B cell (primary cell): ENCODE measurements at regions of chr5 and their contacts with region 1.

Region 1: DNA sequence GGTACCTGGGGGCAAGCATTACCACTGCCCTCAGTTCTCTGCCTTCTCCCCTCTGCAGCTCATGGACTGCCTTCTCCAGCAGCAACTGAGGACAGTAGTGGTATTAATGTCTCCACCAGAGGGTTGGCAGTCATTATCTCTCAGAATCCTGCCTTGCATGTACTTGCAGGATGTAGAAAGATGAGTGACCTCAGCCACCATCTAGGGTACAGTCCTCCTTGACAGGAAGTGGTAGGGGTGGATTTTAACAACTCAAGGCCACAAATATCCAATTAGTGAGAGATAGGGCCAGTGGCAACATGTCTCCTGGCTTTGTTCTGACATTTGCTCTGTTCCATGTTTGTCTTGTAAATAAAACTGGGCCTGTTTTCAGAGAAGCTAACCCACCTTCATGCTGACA is 47.2 kb downstream of the F2R start:
- DNase-seq: no peak
- ATAC-seq: no peak
- H3K4me3 ChIP-seq: no peak overlapping the region
- H3K4me3 Mint-ChIP-seq: no peak overlapping the region
- H3K27ac ChIP-seq: no peak overlapping the region
- H3K27ac Mint-ChIP-seq: no peak overlapping the region
- H3K4me1 ChIP-seq: no peaks in the 10 kb centered on the region
- H3K4me1 Mint-ChIP-seq: no peaks in the 10 kb centered on the region
- H3K27me3 ChIP-seq: no peaks in the 10 kb centered on the region
- H3K27me3 Mint-ChIP-seq: peaks cover 17% of the 10 kb centered on the region
- CTCF ChIP-seq: no peak

Region 2: DNA sequence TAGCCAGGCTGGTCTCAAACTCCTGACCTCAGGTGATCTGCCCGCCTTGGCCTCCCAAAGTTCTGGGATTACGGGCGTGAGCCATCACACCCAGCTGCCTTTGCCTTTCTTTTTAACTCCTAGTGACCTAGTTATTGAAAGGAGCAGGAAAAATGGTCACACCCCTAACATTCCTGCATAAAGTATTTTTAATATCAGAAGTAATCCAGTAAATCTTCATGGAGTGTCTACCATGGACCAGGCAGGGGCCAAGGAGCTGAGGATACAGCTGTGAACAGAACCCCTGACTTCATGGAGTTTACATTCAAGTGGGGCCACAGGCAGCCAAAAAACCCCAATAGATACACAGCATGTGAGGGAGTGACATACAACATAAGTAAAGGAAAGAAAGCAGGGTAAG is 37.4 kb after region 1 on chr5:
- CTCF ChIA-PET with region 1: no interaction called
- POLR2A ChIA-PET with region 1: interaction called, 10 read pairs
- intact Hi-C with region 1: no loop called
- DNase-seq: no peak
- ATAC-seq: no peak
- H3K4me3 ChIP-seq: no peak overlapping the region
- H3K4me3 Mint-ChIP-seq: no peak overlapping the region
- H3K27ac ChIP-seq: no peak overlapping the region
- H3K27ac Mint-ChIP-seq: no peak overlapping the region
- H3K4me1 ChIP-seq: no peaks in the 10 kb centered on the region
- H3K4me1 Mint-ChIP-seq: no peaks in the 10 kb centered on the region
- H3K27me3 ChIP-seq: no peaks in the 10 kb centered on the region
- H3K27me3 Mint-ChIP-seq: peaks cover 22% of the 10 kb centered on the region
- CTCF ChIP-seq: no peak